Heart right ventricle (tissue), 16 donors: ENCODE measurements at regions of chr10 and their contacts with region 1.

Region 1: GRCh38 chr10:20898866-20899535 is 1.9 kb upstream of the NEBL start:
- DNase-seq: no peak
- ATAC-seq: no peak
- H3K4me3 ChIP-seq: no peak overlapping the region
- H3K27ac ChIP-seq: peak overlapping the region in 6 of 10 donors; percentile 13 to 91 (median 90)
- H3K4me1 ChIP-seq: peaks cover 0 to 12% (median 0%) of the 10 kb centered on the region in 9 donors
- H3K27me3 ChIP-seq: no peaks in the 10 kb centered on the region
- CTCF ChIP-seq: no peak

Region 2: DNA sequence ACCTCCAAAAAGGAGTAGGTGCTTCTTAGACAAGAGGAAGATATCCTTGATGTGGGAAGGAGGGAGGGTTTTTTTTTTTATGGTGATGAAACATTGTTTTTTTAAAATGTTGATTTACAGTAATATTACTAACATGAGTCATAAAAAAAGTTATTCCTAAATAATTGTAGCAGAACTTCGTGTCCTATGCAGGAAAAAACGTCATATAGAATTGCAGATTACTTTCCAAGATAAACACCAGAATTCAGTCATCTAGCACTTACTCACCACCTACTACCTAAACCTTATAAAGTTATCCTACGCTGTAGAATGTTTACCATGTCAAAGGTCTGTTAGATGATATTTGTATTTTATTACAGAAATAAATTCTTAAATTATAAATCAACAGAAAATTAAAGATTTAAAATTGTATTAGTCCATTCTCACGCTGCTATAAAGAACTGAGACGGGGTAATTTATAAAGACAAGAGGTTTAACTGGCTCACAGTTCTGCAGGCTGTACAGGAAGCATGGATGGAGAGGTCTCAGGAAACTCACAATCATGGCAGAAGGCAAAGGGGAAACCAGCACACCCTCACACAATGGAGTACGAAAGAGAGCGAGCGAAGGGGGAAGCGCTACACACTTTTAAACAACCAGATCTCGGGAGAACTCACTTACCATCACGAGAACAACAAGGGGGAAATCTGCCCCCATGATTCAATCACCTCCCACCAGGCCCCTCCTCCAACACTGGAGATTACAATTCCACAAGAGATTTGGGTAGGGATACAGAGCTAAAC is 103.3 kb after region 1 on chr10:
- intact Hi-C with region 1: loop called in 1 of 10 experiments (anchors 10 kb)
- DNase-seq: no peak
- ATAC-seq: no peak
- H3K4me3 ChIP-seq: no peak overlapping the region
- H3K27ac ChIP-seq: no peak overlapping the region
- H3K4me1 ChIP-seq: peaks cover 0 to 15% (median 0%) of the 10 kb centered on the region in 9 donors
- H3K27me3 ChIP-seq: no peaks in the 10 kb centered on the region
- CTCF ChIP-seq: no peak

Region 3: GRCh38 chr10:21055339-21056135 is 156.5 kb after region 1 on chr10:
- intact Hi-C with region 1: loop called in 2 of 10 experiments (anchors 10 kb)
- DNase-seq: no peak
- ATAC-seq: peak in 1 of 8 donors; percentile 11
- H3K4me3 ChIP-seq: no peak overlapping the region
- H3K27ac ChIP-seq: no peak overlapping the region
- H3K4me1 ChIP-seq: peaks cover 0 to 13% (median 0%) of the 10 kb centered on the region in 9 donors
- H3K27me3 ChIP-seq: no peaks in the 10 kb centered on the region
- CTCF ChIP-seq: no peak

Region 4: GRCh38 chr10:21069929-21070700 is 171.1 kb after region 1 on chr10:
- intact Hi-C with region 1: loop called in 4 of 10 experiments (anchors 2 to 10 kb)
- DNase-seq: no peak
- ATAC-seq: peak in 6 of 8 donors; percentile 53 to 79 (median 66)
- H3K4me3 ChIP-seq: no peak overlapping the region
- H3K27ac ChIP-seq: peak overlapping the region in 8 of 10 donors; percentile 25 to 66 (median 44)
- H3K4me1 ChIP-seq: peaks cover 0 to 41% (median 12%) of the 10 kb centered on the region in 9 donors
- H3K27me3 ChIP-seq: no peaks in the 10 kb centered on the region
- CTCF ChIP-seq: no peak

Region 5: DNA sequence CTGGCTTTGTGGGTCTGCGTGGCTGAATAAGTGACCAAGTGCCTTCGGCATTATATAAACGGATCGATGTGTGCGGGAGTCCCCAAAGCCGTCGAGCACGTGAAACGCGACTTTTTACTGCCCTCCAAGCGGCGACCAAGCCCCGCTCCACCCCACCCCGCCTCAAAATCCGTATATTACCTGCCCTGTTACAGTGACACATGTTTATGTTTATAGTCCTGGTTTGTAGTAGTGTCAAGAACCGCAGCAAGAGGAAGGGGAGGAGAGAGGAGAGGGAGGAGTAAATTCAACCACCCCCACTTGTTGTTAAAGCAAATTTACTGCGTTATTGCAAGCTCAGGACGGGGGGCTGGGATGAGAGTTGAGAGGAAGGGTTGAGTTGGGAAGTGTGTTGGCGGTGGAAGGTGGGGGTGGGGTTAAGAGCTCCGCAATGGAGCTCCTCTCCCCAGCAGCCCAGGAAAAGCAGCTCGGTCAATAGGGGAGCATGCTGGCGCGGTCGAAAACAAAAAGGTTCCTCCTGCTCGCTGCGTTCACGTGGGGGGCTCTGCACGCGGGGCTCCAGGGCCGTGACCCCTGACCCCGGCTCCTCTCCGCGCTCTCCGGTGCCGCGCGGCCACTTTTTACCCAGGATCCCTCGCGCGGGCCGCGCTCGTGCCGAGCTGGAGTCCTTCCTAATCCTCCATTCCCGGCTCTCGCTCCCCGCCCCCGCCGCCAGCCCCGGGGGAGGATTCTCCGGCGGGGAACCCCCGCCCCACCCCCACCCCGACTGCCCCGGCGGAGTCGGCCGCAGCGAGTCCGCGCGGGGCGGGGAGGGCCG is 626.6 kb after region 1 on chr10 and contains the start of gene SKIDA1:
- intact Hi-C with region 1: no loop called
- DNase-seq: peak; percentile 88 to 90
- ATAC-seq: peak; percentile 71 to 92 (median 88)
- H3K4me3 ChIP-seq: peak within 1 kb of the TSS; percentile 11 to 82 (median 74)
- H3K27ac ChIP-seq: peak within 1 kb of the TSS; percentile 95 to 99 (median 98)
- H3K4me1 ChIP-seq: peaks cover 0 to 44% (median 18%) of the 10 kb centered on the region in 9 donors
- H3K27me3 ChIP-seq: peaks cover 0 to 11% (median 0%) of the 10 kb centered on the region in 7 donors
- CTCF ChIP-seq: no peak
- total RNA-seq, gene SKIDA1: 1.9 to 6.4 (median 3.3) TPM